Activated naive CD4-positive, alpha-beta T cell treated with anti-CD3 and anti-CD28 coated beads, Interleukin-2, amount 10 ng/mL, durations not matched to agents 7 days and 5 days (primary cell): ENCODE measurements at regions of chr16 and their contacts with region 1.

Region 1: DNA sequence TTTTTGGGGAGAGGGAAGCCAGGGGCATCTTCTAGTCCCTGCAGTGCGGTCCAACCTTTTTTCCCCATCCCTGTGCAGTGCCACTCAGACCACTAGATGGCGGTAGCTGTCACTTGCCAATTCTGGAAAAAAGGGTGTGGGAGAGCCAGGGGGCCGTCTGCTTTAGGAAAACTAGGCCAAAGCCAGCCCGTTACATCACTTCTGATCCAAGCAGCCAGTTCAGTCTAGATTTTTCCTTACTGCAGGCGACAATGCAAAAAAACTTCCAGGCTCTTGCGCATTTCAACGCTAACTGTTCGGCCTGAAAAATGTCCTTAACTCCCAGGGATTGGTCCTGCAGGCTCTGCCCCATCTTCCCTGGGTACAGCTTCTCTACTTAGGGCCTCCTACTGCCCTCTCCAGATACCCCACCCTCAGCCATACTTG is 69.2 kb upstream of the CES5A start:
- DNase-seq: peak; percentile 55
- H3K4me3 Mint-ChIP-seq: no peak overlapping the region
- H3K27ac Mint-ChIP-seq: no peak overlapping the region
- H3K4me1 Mint-ChIP-seq: no peaks in the 10 kb centered on the region
- H3K27me3 Mint-ChIP-seq: peaks cover 10% of the 10 kb centered on the region

Region 2: GRCh38 chr16:56203052-56203451 is 258.7 kb after region 1 on chr16:
- CTCF ChIA-PET with region 1: interaction called, 19 read pairs
- DNase-seq: peak; percentile 67
- H3K4me3 Mint-ChIP-seq: no peak overlapping the region
- H3K27ac Mint-ChIP-seq: no peak overlapping the region
- H3K4me1 Mint-ChIP-seq: no peaks in the 10 kb centered on the region
- H3K27me3 Mint-ChIP-seq: peaks cover 20% of the 10 kb centered on the region